Panc1 (cell line): ENCODE measurements at regions of chr6 and their contacts with region 1.

Region 1: DNA sequence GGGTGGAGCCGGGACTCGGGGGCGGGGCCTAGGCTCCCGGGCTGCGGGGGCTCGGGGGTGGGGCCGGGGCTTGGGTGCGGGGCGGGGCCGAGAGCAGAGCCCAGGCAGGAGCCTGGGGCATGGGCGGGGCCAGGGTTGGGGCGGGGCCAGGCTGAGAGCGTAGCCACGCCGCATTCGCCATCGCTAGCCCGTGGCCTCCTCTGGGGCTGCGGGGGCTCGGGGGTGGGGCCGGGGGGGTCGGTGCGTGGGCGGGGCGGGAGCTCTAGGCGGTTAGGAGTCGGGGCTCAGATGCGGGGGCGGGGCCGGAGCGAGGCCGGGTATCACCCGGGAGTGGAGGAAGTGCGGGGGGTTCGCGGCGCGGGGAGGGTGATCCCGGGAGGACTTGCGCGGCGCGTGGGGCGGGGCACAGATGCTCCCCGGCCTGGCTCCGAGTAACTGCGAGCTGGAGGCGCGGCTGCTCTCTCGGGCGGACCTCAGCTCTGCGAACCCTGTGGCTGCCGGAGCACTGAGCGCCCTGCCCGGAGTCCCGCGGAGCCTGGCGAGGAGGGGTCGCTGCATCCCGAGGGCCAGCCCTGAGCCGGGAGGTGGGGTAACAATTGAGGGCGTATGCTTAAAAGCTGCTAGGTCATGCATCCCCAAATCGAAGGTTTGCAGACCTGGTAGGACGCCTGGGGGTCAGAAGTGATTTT is 434 bp upstream of the ECI2 start:
- DNase-seq: no peak
- ATAC-seq: peak; percentile 92
- H3K4me3 ChIP-seq: peak overlapping the region; percentile 74 to 76
- H3K27ac ChIP-seq: peak overlapping the region; percentile 88
- H3K4me1 ChIP-seq: peaks cover 6% of the 10 kb centered on the region; the same call in 1 of the 2 replicates
- H3K27me3 ChIP-seq: no peaks in the 10 kb centered on the region
- CTCF ChIP-seq: no peak

Region 2: GRCh38 chr6:4125500-4125899 is 10.3 kb before region 1 on chr6:
- CTCF ChIA-PET with region 1: interaction called, 10 read pairs
- POLR2A ChIA-PET with region 1: no interaction called
- in situ Hi-C with region 1: no loop called
- intact Hi-C with region 1: no loop called
- DNase-seq: no peak
- ATAC-seq: no peak
- H3K4me3 ChIP-seq: no peak overlapping the region
- H3K27ac ChIP-seq: no peak overlapping the region
- H3K4me1 ChIP-seq: no peaks in the 10 kb centered on the region
- H3K27me3 ChIP-seq: no peaks in the 10 kb centered on the region
- CTCF ChIP-seq: no peak